IMR-90 (cell line): ENCODE measurements at regions of chr19 and their contacts with region 1.

Region 1: GRCh38 chr19:49042177-49042576 is 1.5 kb upstream of the CGB5 start:
- DNase-seq: no peak
- ATAC-seq: no peak
- H3K4me3 ChIP-seq: no peak overlapping the region
- H3K27ac ChIP-seq: no peak overlapping the region
- H3K4me1 ChIP-seq: peaks cover 9% of the 10 kb centered on the region; the same call in 1 of the 2 replicates
- H3K27me3 ChIP-seq: no peaks in the 10 kb centered on the region
- CTCF ChIP-seq: no peak
- POLR2A ChIP-seq: no peak
- RAD21 ChIP-seq: no peak

Region 2: GRCh38 chr19:48806518-48806817 is 235.7 kb before region 1 on chr19:
- CTCF ChIA-PET with region 1: no interaction called
- POLR2A ChIA-PET with region 1: no interaction called
- dilution Hi-C with region 1: no loop called
- in situ Hi-C with region 1: no loop called
- intact Hi-C with region 1: no loop called
- DNase-seq: no peak
- ATAC-seq: no peak
- H3K4me3 ChIP-seq: no peak overlapping the region
- H3K27ac ChIP-seq: no peak overlapping the region
- H3K4me1 ChIP-seq: peaks cover 5% of the 10 kb centered on the region; the same call in 1 of the 2 replicates
- H3K27me3 ChIP-seq: no peaks in the 10 kb centered on the region
- CTCF ChIP-seq: no peak
- POLR2A ChIP-seq: no peak
- RAD21 ChIP-seq: no peak

Region 3: GRCh38 chr19:49530708-49531107 is 488.5 kb after region 1 on chr19:
- CTCF ChIA-PET with region 1: no interaction called
- POLR2A ChIA-PET with region 1: interaction called, 15 read pairs
- dilution Hi-C with region 1: no loop called
- in situ Hi-C with region 1: no loop called
- intact Hi-C with region 1: no loop called
- DNase-seq: no peak
- ATAC-seq: no peak
- H3K4me3 ChIP-seq: no peak overlapping the region
- H3K27ac ChIP-seq: no peak overlapping the region
- H3K4me1 ChIP-seq: peaks cover 8% of the 10 kb centered on the region
- H3K27me3 ChIP-seq: no peaks in the 10 kb centered on the region
- CTCF ChIP-seq: no peak
- POLR2A ChIP-seq: no peak
- RAD21 ChIP-seq: no peak